Activated CD8-positive, alpha-beta memory T cell treated with anti-CD3 and anti-CD28 coated beads, Interleukin-2, amount 10 ng/mL, durations not matched to agents 7 days and 5 days (primary cell): ENCODE measurements at regions of chr12 and their contacts with region 1.

Region 1: GRCh38 chr12:55073043-55074022 is 52.9 kb upstream of the OR9K2 start:
- DNase-seq: peak; percentile 83
- ATAC-seq: peak; percentile 66
- H3K4me3 Mint-ChIP-seq: no peak overlapping the region
- H3K27ac Mint-ChIP-seq: no peak overlapping the region
- H3K4me1 Mint-ChIP-seq: peaks cover 1% of the 10 kb centered on the region
- H3K27me3 Mint-ChIP-seq: peaks cover 35% of the 10 kb centered on the region

Region 2: DNA sequence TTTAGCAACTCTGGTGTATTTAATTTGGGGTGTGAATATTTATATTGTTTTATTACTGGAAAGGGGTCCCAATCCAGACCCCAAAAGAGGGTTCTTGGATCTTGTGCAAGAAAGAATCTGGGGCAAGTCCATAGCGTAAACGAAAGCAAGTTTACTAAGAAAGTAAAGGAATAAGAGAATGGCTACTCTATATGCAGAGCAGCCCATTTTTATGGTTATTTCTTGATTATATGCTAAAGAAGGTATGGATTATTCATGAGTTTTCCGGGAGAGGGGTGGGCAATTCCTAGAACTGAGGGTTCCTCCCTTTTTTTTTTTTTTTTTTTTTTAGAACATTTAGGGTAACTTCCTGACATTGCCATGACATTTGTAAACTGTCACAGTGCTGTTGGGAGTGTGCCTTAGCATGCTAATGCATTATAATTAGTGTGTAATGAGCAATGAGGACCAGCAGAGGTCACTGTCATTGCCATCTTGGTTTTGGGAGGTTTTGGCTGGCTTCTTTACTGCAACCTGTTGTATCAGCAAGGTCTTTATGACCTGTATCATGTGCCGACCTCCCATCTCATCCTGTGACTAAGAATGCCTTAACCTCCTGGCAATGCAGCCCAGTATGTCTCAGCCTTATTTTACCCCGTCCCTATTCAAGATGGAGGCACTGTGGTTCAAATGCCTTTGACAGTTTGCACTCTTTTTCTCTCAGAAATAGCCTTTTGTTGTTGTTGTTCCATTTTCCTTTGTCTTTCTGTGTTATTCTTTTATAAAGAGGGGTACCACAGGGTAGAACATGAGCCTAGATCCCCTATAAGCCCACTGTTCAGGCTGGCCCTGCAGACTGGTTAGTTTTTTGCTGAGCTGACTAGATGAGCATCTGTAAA is 349.7 kb before region 1 on chr12:
- CTCF ChIA-PET with region 1: interaction called, 10 read pairs
- DNase-seq: peak; percentile 47
- ATAC-seq: peak; percentile 78
- H3K4me3 Mint-ChIP-seq: no peak overlapping the region
- H3K27ac Mint-ChIP-seq: no peak overlapping the region
- H3K4me1 Mint-ChIP-seq: peaks cover 7% of the 10 kb centered on the region
- H3K27me3 Mint-ChIP-seq: peaks cover 28% of the 10 kb centered on the region

Region 3: GRCh38 chr12:54853995-54854566 is 219.3 kb before region 1 on chr12 and contains the start of gene MUCL1:
- CTCF ChIA-PET with region 1: interaction called, 16 read pairs
- DNase-seq: peak; percentile 84
- ATAC-seq: peak; percentile 100
- H3K4me3 Mint-ChIP-seq: no peak within 1 kb of the TSS
- H3K27ac Mint-ChIP-seq: no peak within 1 kb of the TSS
- H3K4me1 Mint-ChIP-seq: peaks cover 6% of the 10 kb centered on the region
- H3K27me3 Mint-ChIP-seq: no peaks in the 10 kb centered on the region
- total RNA-seq, gene MUCL1: not detected

Region 4: GRCh38 chr12:54977155-54977554 is 96.2 kb before region 1 on chr12:
- CTCF ChIA-PET with region 1: interaction called, 18 read pairs
- DNase-seq: no peak
- ATAC-seq: no peak
- H3K4me3 Mint-ChIP-seq: no peak overlapping the region
- H3K27ac Mint-ChIP-seq: peak overlapping the region; percentile 42
- H3K4me1 Mint-ChIP-seq: peaks cover 69% of the 10 kb centered on the region
- H3K27me3 Mint-ChIP-seq: no peaks in the 10 kb centered on the region

Region 5: GRCh38 chr12:55019779-55020178 is 53.6 kb before region 1 on chr12 and contains the start of gene NEUROD4:
- CTCF ChIA-PET with region 1: interaction called, 11 read pairs
- DNase-seq: peak; percentile 45
- ATAC-seq: peak; percentile 63
- H3K4me3 Mint-ChIP-seq: no peak within 1 kb of the TSS
- H3K27ac Mint-ChIP-seq: no peak within 1 kb of the TSS
- H3K4me1 Mint-ChIP-seq: peaks cover 4% of the 10 kb centered on the region
- H3K27me3 Mint-ChIP-seq: peaks cover 58% of the 10 kb centered on the region
- total RNA-seq, gene NEUROD4: not detected